Transverse colon (tissue), 4 donors: ENCODE measurements at regions of chrX and their contacts with region 1.

Region 1: DNA sequence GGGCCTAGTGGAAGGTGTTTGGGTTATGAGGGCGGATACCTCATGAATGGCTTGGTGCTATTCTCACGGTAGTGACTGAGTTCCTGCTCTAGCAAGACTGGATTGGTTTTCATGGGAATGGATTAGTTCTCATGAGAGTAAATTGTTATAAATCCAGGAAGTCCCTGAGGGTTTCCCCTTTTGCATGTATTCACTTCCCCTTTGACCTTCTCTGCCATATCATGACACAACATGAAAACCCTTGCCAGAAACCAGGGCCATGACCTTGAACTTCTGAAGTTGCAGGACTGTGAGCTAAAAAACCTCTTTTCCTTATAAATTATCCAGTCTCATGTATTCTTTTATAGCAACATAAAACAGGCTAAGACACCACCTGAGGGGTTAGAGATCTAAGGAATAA is 529.7 kb upstream of the RPS6KA3 start:
- DNase-seq: no peak
- H3K4me3 ChIP-seq: no peak overlapping the region
- H3K27ac ChIP-seq: no peak overlapping the region
- H3K4me1 ChIP-seq: no peaks in the 10 kb centered on the region
- H3K27me3 ChIP-seq: no peaks in the 10 kb centered on the region
- CTCF ChIP-seq: no peak
- EP300 ChIP-seq: no peak
- POLR2A ChIP-seq: no peak

Region 2: DNA sequence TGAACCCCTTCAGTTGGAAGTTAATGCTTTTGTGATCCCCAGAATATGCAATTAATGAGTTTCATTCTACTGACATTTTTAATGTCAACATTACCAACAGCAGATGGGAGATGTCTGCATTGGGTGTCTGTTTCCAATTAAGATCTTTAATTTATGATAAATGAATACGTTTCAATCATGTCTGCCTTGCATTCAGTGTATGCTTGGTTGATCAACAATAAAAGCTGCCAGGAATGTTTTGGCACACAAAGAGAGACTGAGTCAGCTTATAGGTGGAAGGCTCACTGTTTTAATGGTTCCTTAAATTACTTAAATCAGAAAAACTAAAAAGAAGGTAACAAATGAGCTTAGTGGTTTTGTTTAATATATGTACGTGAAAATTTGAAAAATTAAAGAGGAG is 217.9 kb after region 1 on chrX:
- in situ Hi-C with region 1: no loop called
- intact Hi-C with region 1: no loop called
- DNase-seq: no peak
- H3K4me3 ChIP-seq: no peak overlapping the region
- H3K27ac ChIP-seq: no peak overlapping the region
- H3K4me1 ChIP-seq: no peaks in the 10 kb centered on the region
- H3K27me3 ChIP-seq: no peaks in the 10 kb centered on the region
- CTCF ChIP-seq: no peak
- EP300 ChIP-seq: no peak
- POLR2A ChIP-seq: no peak

Region 3: GRCh38 chrX:21193196-21193595 is 396.7 kb after region 1 on chrX:
- in situ Hi-C with region 1: no loop called
- intact Hi-C with region 1: loop called (anchors 10 kb)
- DNase-seq: no peak
- H3K4me3 ChIP-seq: no peak overlapping the region
- H3K27ac ChIP-seq: no peak overlapping the region
- H3K4me1 ChIP-seq: no peaks in the 10 kb centered on the region
- H3K27me3 ChIP-seq: no peaks in the 10 kb centered on the region
- CTCF ChIP-seq: no peak
- EP300 ChIP-seq: no peak
- POLR2A ChIP-seq: no peak